Activated CD4-positive, alpha-beta memory T cell treated with anti-CD3 and anti-CD28 coated beads for 36 hours (primary cell): ENCODE measurements at regions of chr15 and their contacts with region 1.

Region 1: GRCh38 chr15:35751413-35752133 is 205.6 kb upstream of the DPH6 start:
- DNase-seq: peak; percentile 55
- H3K4me3 Mint-ChIP-seq: no peak overlapping the region
- H3K27ac Mint-ChIP-seq: no peak overlapping the region
- H3K4me1 Mint-ChIP-seq: no peaks in the 10 kb centered on the region
- H3K27me3 Mint-ChIP-seq: peaks cover 12% of the 10 kb centered on the region

Region 2: GRCh38 chr15:35738370-35738769 is 13.2 kb before region 1 on chr15:
- CTCF ChIA-PET with region 1: interaction called, 11 read pairs
- POLR2A ChIA-PET with region 1: no interaction called
- intact Hi-C with region 1: no loop called
- DNase-seq: no peak
- H3K4me3 Mint-ChIP-seq: no peak overlapping the region
- H3K27ac Mint-ChIP-seq: no peak overlapping the region
- H3K4me1 Mint-ChIP-seq: no peaks in the 10 kb centered on the region
- H3K27me3 Mint-ChIP-seq: peaks cover 2% of the 10 kb centered on the region

Region 3: DNA sequence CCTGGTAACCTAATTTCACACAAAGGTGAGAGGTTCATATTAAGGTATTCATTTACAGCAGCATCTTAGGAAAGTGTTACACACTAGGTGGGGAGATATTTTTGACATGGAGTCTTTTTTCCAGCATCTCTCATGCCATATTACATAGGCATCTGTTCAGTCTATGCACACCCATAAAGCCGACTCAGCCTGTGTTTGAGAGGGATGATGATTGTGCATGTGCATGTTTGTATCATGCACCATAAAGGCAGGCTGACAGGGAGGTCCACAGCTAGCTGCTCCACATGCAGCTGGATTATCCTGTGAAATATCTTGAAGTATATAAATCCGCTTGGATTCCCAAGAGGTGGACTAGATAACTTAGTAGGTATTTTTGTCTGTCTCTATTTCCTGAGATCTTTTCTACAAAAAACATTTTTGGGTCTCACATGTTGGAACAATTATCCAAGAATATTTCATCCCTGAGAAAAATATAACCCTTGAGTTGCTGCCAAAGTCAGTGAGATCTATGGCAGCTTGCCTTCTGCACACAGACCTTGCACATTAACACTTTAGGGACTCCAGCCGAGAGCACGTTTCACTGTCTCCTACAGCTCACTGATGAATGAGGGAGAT is 82.8 kb after region 1 on chr15:
- CTCF ChIA-PET with region 1: no interaction called
- POLR2A ChIA-PET with region 1: no interaction called
- intact Hi-C with region 1: no loop called
- DNase-seq: no peak
- H3K4me3 Mint-ChIP-seq: no peak overlapping the region
- H3K27ac Mint-ChIP-seq: no peak overlapping the region
- H3K4me1 Mint-ChIP-seq: no peaks in the 10 kb centered on the region
- H3K27me3 Mint-ChIP-seq: no peaks in the 10 kb centered on the region

Region 4: DNA sequence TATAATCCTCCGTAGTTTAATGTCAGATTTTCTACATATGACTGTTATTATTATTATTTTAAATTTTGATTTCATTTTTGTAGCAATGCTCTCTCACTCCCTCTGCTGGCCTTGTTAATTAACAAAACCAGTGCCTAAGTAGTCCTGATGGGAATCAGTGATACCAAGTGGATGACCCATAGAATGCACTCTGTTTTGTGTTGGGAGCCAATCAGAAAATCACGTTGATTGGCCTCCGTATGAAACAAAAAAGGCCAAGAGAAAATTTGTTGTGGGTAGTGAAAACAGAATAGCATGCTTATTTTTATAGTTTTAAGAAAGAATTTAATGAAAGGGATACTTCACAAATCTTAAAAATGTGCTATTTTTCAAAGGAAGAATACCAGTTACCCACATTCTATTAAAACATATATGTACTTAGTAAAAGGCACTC is 1383.1 kb after region 1 on chr15:
- CTCF ChIA-PET with region 1: no interaction called
- POLR2A ChIA-PET with region 1: no interaction called
- intact Hi-C with region 1: loop called (anchors 10 kb)
- DNase-seq: no peak
- H3K4me3 Mint-ChIP-seq: no peak overlapping the region
- H3K27ac Mint-ChIP-seq: no peak overlapping the region
- H3K4me1 Mint-ChIP-seq: no peaks in the 10 kb centered on the region
- H3K27me3 Mint-ChIP-seq: peaks cover 9% of the 10 kb centered on the region